Caco-2 (cell line): ENCODE measurements at regions of chr22 and their contacts with region 1.

Region 1: GRCh38 chr22:38272373-38273134 is at the start of gene TMEM184B:
- DNase-seq: peak; percentile 55 to 87
- H3K4me3 ChIP-seq: peak within 1 kb of the TSS; percentile 97
- H3K4me3 Mint-ChIP-seq: peak within 1 kb of the TSS; percentile 83
- H3K27ac Mint-ChIP-seq: peak within 1 kb of the TSS; percentile 75
- H3K4me1 ChIP-seq: peaks cover 5% of the 10 kb centered on the region
- H3K4me1 Mint-ChIP-seq: peaks cover 23% of the 10 kb centered on the region
- H3K27me3 ChIP-seq: no peaks in the 10 kb centered on the region
- H3K27me3 Mint-ChIP-seq: no peaks in the 10 kb centered on the region
- CTCF ChIP-seq: no peak
- total RNA-seq, gene TMEM184B: 52.4 and 53.3 TPM in 2 replicates

Region 2: DNA sequence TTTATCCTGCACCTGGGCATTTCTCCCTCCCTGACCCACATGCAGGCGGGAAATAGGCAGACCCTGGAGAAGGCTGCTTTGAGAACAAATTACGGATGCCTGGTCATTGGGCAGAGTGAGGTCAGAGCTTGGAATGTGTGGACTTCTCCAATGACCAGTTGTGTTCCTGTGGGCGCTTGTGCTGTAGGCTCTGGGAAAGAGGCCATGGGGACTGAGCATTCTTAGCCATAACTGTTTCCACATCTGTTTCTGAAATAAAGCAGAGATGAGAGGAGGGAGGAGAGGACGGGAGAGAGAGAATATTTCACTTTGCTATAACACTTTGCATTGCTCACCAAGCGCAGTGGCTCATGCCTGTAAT is 11.5 kb after region 1 on chr22:
- CTCF ChIA-PET with region 1: no interaction called
- POLR2A ChIA-PET with region 1: no interaction called
- intact Hi-C with region 1: loop called (anchors 1 kb)
- DNase-seq: no peak
- H3K4me3 ChIP-seq: no peak overlapping the region
- H3K4me3 Mint-ChIP-seq: peak overlapping the region; percentile 60
- H3K27ac Mint-ChIP-seq: peak overlapping the region; percentile 88
- H3K4me1 ChIP-seq: peaks cover 37% of the 10 kb centered on the region
- H3K4me1 Mint-ChIP-seq: peaks cover 22% of the 10 kb centered on the region
- H3K27me3 ChIP-seq: no peaks in the 10 kb centered on the region
- H3K27me3 Mint-ChIP-seq: no peaks in the 10 kb centered on the region
- CTCF ChIP-seq: no peak